Endothelial cell of umbilical vein (primary cell): ENCODE measurements at regions of chr18 and their contacts with region 1.

Region 1: GRCh38 chr18:45275367-45276113 is 339.7 kb upstream of the SLC14A2 start:
- DNase-seq: peak; percentile 24
- H3K4me3 ChIP-seq: no peak overlapping the region
- H3K27ac ChIP-seq: no peak overlapping the region
- H3K4me1 ChIP-seq: no peaks in the 10 kb centered on the region
- H3K27me3 ChIP-seq: no peaks in the 10 kb centered on the region
- CTCF ChIP-seq: peak; percentile 42 to 47
- POLR2A ChIP-seq: no peak

Region 2: DNA sequence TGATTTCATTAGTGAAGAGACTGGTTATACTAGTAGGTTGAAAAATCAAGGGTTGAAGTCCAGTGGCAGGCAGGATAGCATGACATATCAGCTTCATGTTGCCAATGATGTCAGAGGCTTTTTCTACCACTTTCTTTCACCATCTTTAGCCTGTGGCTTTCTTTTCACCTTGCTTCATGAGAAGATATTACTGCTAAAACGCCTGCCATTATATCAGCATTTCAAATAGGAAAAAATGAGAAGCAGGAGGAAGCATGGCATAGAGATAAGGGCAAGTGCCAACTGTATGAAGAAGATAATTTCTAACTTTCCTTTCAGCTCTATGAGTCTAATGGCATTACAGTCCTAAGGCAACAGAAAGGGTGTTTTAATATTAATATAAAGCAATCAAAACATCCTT is 1728.1 kb before region 1 on chr18:
- CTCF ChIA-PET with region 1: no interaction called
- POLR2A ChIA-PET with region 1: no interaction called
- dilution Hi-C with region 1: no loop called
- intact Hi-C with region 1: no loop called
- DNase-seq: no peak
- H3K4me3 ChIP-seq: no peak overlapping the region
- H3K27ac ChIP-seq: no peak overlapping the region
- H3K4me1 ChIP-seq: no peaks in the 10 kb centered on the region
- H3K27me3 ChIP-seq: no peaks in the 10 kb centered on the region
- CTCF ChIP-seq: no peak
- POLR2A ChIP-seq: no peak

Region 3: DNA sequence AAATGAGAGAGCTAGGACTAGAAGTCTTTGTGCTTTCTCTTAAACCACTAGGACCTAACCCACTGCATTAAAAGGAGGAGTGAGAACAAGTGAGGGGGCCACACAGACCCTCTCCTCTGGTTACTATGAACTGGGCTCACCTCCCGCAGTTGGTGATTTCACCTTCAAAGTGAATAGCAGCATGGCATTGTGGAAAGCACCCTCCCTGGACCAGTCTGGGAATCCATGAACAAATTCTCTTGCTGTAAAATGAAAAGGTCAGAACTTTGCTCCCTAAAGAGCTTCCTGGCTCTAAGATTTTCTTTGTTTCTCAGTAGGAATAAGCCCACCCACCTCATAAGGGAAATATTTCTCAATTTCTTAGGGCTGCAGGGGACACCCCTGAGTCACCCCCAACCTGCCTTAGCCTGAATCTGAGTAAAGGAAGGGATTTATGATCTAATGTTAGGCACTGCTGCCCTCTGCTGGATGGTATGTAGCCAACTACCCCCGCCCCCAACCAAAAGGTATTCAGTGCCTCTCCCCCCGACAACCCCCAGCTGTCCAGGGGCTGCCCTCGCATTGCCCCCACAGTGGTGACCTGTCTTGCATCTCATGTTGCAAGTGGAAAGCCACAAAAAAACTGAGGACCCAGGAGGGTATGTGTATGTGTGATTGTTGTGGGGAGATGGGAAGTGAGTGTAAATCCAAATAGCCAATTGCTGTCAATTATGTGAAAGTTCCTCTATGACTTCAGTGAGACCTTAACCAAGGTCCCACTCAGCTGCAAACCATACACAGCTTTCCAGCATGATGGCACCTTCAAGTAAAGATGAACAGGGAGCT is 108.8 kb after region 1 on chr18:
- CTCF ChIA-PET with region 1: no interaction called
- POLR2A ChIA-PET with region 1: no interaction called
- dilution Hi-C with region 1: no loop called
- intact Hi-C with region 1: loop called (anchors 10 kb)
- DNase-seq: peak; percentile 45
- H3K4me3 ChIP-seq: no peak overlapping the region
- H3K27ac ChIP-seq: no peak overlapping the region
- H3K4me1 ChIP-seq: no peaks in the 10 kb centered on the region
- H3K27me3 ChIP-seq: no peaks in the 10 kb centered on the region
- CTCF ChIP-seq: peak; percentile 42 to 60
- POLR2A ChIP-seq: no peak

Region 4: DNA sequence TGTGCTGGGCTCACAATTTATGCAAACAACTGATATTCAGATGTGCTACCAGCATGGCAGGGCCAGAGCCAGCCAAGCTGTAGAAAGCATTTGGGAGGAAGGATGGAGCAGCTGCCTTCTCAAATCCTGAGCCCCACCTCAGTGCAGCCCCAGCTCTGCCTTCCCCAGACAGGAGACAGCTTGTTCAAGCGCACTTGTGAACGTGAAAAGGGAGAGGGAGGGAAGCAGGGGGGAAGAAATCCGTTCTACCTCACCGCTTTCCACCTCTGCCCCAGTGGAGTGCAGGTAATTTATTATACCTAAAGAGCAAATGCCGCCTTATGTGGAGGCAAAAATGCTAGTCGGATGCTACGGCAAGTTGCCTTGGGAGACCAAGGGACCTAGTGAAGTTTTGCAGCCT is 273.8 kb after region 1 on chr18:
- CTCF ChIA-PET with region 1: no interaction called
- POLR2A ChIA-PET with region 1: no interaction called
- dilution Hi-C with region 1: no loop called
- intact Hi-C with region 1: no loop called
- DNase-seq: no peak
- H3K4me3 ChIP-seq: no peak overlapping the region
- H3K27ac ChIP-seq: no peak overlapping the region
- H3K4me1 ChIP-seq: no peaks in the 10 kb centered on the region
- H3K27me3 ChIP-seq: no peaks in the 10 kb centered on the region
- CTCF ChIP-seq: no peak
- POLR2A ChIP-seq: no peak